ENCODE measurements at regions of chr2 and their contacts with region 1.

Region 1: GRCh38 chr2:65169760-65170136 is 39.8 kb upstream of the RAB1A start:
- DNase-seq: no peak
- ATAC-seq: no peak
- H3K4me3 ChIP-seq: no peak overlapping the region
- H3K4me3 Mint-ChIP-seq: no peak overlapping the region
- H3K27ac ChIP-seq: no peak overlapping the region
- H3K27ac Mint-ChIP-seq: no peak overlapping the region
- H3K4me1 ChIP-seq: no peaks in the 10 kb centered on the region
- H3K4me1 Mint-ChIP-seq: peaks cover 0 to 5% (median 2%) of the 10 kb centered on the region in 3 donors
- H3K27me3 ChIP-seq: no peaks in the 10 kb centered on the region
- H3K27me3 Mint-ChIP-seq: no peaks in the 10 kb centered on the region

Region 2: GRCh38 chr2:64957109-64957903 is 212.4 kb before region 1 on chr2:
- CTCF ChIA-PET with region 1: no interaction called
- POLR2A ChIA-PET with region 1: no interaction called
- DNase-seq: no peak
- ATAC-seq: no peak
- H3K4me3 ChIP-seq: no peak overlapping the region
- H3K4me3 Mint-ChIP-seq: no peak overlapping the region
- H3K27ac ChIP-seq: no peak overlapping the region
- H3K27ac Mint-ChIP-seq: no peak overlapping the region
- H3K4me1 ChIP-seq: no peaks in the 10 kb centered on the region
- H3K4me1 Mint-ChIP-seq: no peaks in the 10 kb centered on the region
- H3K27me3 ChIP-seq: no peaks in the 10 kb centered on the region
- H3K27me3 Mint-ChIP-seq: no peaks in the 10 kb centered on the region

Region 3: GRCh38 chr2:65064728-65065552 is 104.8 kb before region 1 on chr2:
- CTCF ChIA-PET with region 1: interaction called, 16 to 27 read pairs
- POLR2A ChIA-PET with region 1: no interaction called
- DNase-seq: peak in 30 of 35 experiments; percentile 10 to 81 (median 34)
- ATAC-seq: peak; percentile 69 to 85 (median 72)
- H3K4me3 ChIP-seq: no peak overlapping the region
- H3K4me3 Mint-ChIP-seq: peak overlapping the region in 1 of 3 donors; percentile 49
- H3K27ac ChIP-seq: no peak overlapping the region
- H3K27ac Mint-ChIP-seq: peak overlapping the region in 1 of 2 donors; percentile 71
- H3K4me1 ChIP-seq: peaks cover 0 to 37% of the 10 kb centered on the region in 2 experiments
- H3K4me1 Mint-ChIP-seq: peaks cover 47 to 68% (median 67%) of the 10 kb centered on the region in 3 donors
- H3K27me3 ChIP-seq: no peaks in the 10 kb centered on the region
- H3K27me3 Mint-ChIP-seq: no peaks in the 10 kb centered on the region

Region 4: DNA sequence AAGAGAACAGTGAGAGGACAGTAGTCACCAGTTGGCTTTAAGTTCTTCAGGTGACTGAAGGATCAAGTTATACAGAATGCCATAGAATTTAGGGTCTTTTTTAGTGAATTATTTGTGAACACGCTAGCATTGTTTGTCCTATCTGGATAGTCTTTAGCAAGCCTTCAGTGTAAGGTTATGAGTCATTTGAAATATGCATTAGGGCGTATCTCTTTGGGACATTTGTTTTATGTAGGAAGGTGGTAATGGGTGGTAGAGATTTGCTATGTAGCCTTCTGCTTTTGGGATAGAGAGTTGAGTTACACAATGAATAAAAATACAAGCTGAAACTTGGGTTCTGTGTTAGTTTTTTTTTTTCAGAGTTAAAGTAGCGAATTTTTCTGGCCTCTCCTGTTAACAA is 70.9 kb after region 1 on chr2:
- CTCF ChIA-PET with region 1: no interaction called
- POLR2A ChIA-PET with region 1: no interaction called
- DNase-seq: no peak
- ATAC-seq: no peak
- H3K4me3 ChIP-seq: no peak overlapping the region
- H3K4me3 Mint-ChIP-seq: peak overlapping the region in 1 of 3 donors; percentile 39
- H3K27ac ChIP-seq: no peak overlapping the region
- H3K27ac Mint-ChIP-seq: no peak overlapping the region
- H3K4me1 ChIP-seq: peaks cover 0 to 32% of the 10 kb centered on the region in 2 experiments
- H3K4me1 Mint-ChIP-seq: peaks cover 38 to 72% (median 62%) of the 10 kb centered on the region in 3 donors
- H3K27me3 ChIP-seq: no peaks in the 10 kb centered on the region
- H3K27me3 Mint-ChIP-seq: no peaks in the 10 kb centered on the region